Activated CD8-positive, alpha-beta memory T cell treated with anti-CD3 and anti-CD28 coated beads, Interleukin-2, amount 10 ng/mL, durations not matched to agents 7 days and 5 days (primary cell): ENCODE measurements at regions of chr19 and their contacts with region 1.

Region 1: GRCh38 chr19:51660975-51661600 is 14.5 kb upstream of the SIGLEC14 start:
- DNase-seq: peak; percentile 73
- ATAC-seq: peak; percentile 49
- H3K4me3 Mint-ChIP-seq: no peak overlapping the region
- H3K27ac Mint-ChIP-seq: no peak overlapping the region
- H3K4me1 Mint-ChIP-seq: peaks cover 5% of the 10 kb centered on the region
- H3K27me3 Mint-ChIP-seq: peaks cover 38% of the 10 kb centered on the region

Region 2: DNA sequence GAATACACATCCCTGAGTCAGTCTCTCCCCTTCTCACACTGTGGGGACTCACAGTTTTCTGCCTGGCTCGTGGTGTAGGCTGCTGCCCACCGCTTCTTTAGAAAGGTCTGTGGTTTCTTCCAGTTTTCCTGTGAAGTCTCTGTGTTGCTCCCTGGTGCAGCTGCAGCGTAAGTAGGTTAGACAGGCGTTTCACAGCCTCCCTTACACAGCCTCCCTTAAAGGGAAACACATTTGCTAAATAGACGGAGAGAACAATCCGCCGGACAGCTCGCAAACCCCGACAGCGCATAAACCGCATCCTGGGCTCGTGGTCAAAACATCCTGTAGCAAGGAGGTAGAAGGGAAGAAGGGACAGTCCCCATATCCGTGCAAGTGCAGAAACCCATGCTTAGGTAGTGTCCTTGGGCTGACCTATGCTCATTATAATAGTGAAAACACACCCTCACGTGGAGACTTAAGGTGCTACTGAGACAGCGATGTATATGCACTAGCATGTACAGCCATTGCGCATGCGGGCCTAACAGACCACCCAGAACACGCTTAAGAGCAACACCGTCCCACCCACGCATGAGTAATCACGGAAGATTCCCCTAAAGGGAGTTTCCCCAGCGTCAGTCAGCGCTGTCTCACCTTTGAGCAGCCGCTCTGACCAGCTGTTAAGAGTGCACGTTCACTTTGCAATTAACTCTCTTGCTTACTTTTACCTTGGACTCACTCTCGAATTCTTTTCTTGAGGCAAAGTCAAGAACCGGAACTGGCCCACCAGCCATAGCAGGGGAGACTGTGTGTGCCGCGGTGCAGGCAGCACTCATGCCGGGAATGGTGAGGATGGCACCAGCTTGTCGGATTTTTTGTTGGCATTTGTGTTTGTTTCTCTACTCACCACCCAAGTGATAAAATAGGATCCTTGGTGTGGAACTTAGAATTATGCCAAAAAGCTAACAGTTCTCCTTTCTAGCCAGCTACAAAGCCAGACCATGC is 219.4 kb before region 1 on chr19:
- CTCF ChIA-PET with region 1: interaction called, 13 read pairs
- DNase-seq: peak; percentile 99
- ATAC-seq: peak; percentile 91
- H3K4me3 Mint-ChIP-seq: peak overlapping the region; percentile 68
- H3K27ac Mint-ChIP-seq: peak overlapping the region; percentile 82
- H3K4me1 Mint-ChIP-seq: peaks cover 39% of the 10 kb centered on the region
- H3K27me3 Mint-ChIP-seq: peaks cover 31% of the 10 kb centered on the region

Region 3: DNA sequence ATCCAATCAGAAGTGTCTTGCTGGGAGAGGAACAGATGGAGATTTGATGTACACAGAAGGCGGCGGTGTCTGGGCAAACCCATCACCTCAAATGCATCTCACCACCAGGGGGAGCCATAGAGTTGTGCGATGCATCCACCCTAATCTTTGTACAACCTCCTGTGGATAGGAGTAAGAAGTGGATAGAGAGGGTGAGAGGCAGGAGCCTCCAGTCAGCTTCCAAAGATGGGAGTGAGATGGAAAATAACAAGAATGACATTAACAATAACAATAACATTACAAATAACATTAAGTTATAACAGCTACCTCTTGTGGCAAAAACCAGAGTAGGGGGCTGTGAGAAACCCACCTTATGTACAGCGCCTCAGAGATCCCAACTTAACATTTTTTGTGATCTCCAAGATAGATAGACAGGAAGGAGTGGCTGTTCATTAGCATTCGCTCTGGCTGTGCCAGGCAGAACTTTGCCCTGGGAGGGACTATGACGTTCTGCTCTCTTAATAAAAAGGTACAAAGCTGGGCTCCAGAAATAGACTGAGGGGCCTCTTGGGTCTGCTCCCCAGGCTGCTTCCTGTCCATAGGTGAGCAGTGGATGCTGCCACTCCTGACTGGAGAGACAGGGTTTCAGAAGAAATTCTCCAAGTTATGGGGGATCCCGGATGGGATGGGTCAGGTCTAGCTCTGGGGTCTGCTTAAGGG is 187.9 kb before region 1 on chr19:
- CTCF ChIA-PET with region 1: interaction called, 50 read pairs
- DNase-seq: peak; percentile 87
- ATAC-seq: peak; percentile 79
- H3K4me3 Mint-ChIP-seq: no peak overlapping the region
- H3K27ac Mint-ChIP-seq: no peak overlapping the region
- H3K4me1 Mint-ChIP-seq: peaks cover 12% of the 10 kb centered on the region
- H3K27me3 Mint-ChIP-seq: peaks cover 20% of the 10 kb centered on the region

Region 4: DNA sequence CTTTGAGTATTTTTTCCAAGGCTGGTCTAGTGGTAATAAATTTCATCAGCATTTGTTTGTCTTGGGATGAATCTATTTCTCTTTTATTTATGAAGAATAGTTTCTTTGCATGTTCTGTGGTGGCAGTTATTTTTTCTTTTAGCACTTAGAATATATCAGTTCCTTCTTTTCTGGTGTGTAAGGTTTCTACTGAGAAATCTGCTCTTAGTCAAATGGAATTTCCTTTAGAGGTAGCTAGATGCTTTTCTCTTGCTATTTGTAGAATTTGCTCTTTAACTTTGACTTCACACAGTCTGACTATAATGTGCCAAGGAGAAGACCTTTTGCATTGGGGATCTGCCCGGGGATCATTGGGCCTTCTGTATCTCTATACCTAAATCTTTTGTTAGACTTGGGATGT is 125.6 kb before region 1 on chr19:
- CTCF ChIA-PET with region 1: no interaction called
- DNase-seq: no peak
- ATAC-seq: no peak
- H3K4me3 Mint-ChIP-seq: no peak overlapping the region
- H3K27ac Mint-ChIP-seq: no peak overlapping the region
- H3K4me1 Mint-ChIP-seq: no peaks in the 10 kb centered on the region
- H3K27me3 Mint-ChIP-seq: peaks cover 70% of the 10 kb centered on the region

Region 5: DNA sequence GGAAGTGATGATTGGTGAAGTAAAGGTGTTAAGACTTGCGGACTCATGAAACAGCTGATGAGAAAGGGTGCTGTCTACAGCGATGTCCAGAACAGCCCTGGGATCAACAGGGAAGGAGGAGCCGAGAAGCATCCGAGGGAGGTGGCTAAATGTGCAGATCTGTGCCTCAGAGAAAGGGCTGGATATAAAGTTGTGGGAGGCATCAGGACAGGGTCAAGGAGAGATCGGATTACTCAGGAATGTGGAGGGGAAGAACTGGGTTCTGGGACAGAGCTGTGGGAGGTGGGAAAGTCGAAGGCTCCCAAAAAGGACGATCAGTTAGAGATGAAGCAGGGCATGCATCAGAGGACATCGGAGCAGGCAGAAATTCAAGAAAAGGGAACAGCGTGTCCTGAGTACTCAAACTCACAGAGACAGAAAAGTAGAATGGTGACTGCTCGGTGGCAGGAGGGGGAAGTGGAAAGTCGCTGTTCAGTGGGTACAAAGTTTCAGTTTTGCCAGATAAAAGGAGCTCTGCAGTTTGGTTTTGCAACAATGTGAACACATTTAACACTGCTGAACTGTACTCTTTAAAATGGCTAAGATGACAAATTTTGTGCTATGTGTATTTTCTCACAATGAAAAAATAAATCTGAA is 16.3 kb before region 1 on chr19:
- CTCF ChIA-PET with region 1: interaction called, 25 read pairs
- DNase-seq: no peak
- ATAC-seq: no peak
- H3K4me3 Mint-ChIP-seq: no peak overlapping the region
- H3K27ac Mint-ChIP-seq: no peak overlapping the region
- H3K4me1 Mint-ChIP-seq: no peaks in the 10 kb centered on the region
- H3K27me3 Mint-ChIP-seq: peaks cover 34% of the 10 kb centered on the region

Region 6: GRCh38 chr19:51703575-51704515 is 42.8 kb after region 1 on chr19:
- CTCF ChIA-PET with region 1: interaction called, 12 read pairs
- DNase-seq: peak; percentile 96
- ATAC-seq: peak; percentile 98
- H3K4me3 Mint-ChIP-seq: peak overlapping the region; percentile 83
- H3K27ac Mint-ChIP-seq: peak overlapping the region; percentile 89
- H3K4me1 Mint-ChIP-seq: peaks cover 15% of the 10 kb centered on the region
- H3K27me3 Mint-ChIP-seq: peaks cover 10% of the 10 kb centered on the region